HCT116 (cell line): ENCODE measurements at regions of chr16 and their contacts with region 1.

Region 1: DNA sequence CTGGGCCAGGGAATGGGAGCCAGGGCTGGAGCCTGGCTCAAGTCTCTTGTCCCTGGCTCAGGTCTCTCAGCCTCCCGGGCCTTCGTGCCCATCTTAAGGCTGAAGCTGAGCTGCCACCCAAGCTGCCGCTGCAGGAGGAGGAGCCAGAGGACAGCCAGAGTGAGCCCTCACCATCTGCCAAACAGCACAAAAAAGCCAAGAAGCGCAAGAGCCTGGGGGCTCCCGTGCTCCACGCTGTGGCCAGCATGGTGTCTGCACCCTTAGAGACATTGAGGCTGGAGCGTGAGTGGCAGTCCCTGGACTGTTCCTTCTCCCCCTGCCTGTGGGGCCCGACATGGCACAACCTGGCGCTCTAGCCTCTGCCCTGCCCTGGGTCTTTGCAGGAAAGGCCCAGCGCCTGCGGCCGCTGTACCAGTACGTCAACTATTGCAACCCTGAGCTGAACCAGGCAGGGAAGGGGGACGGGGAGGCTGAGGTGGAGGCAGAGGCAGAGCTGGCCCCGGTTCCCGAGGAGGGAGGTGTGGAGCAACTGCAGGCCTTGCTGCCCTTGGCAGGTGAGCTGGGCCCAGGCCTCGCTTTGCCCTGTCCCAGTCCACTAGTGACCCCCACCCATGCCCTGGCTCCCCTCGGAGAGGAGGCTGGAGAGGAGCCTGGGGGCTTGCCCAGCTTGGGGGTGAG is 1.3 kb downstream of the C16orf86 start:
- DNase-seq: peak; percentile 77
- ATAC-seq: peak; percentile 83
- H3K4me3 ChIP-seq: no peak overlapping the region
- H3K27ac ChIP-seq: peak overlapping the region; percentile 50; the same call in 1 of the 2 replicates
- H3K4me1 ChIP-seq: peaks cover 6 to 41% of the 10 kb centered on the region in 2 experiments; a peak in 3 of 4 replicates
- H3K27me3 ChIP-seq: no peaks in the 10 kb centered on the region
- CTCF ChIP-seq: peak in 2 of 3 experiments; percentile 75 to 88; a peak in 4 of 6 replicates
- POLR2A ChIP-seq: no peak
- RAD21 ChIP-seq: no peak

Region 2: GRCh38 chr16:67499106-67499505 is 168.8 kb before region 1 on chr16:
- CTCF ChIA-PET with region 1: no interaction called
- POLR2A ChIA-PET with region 1: no interaction called
- RAD21 ChIA-PET with region 1: no interaction called
- intact Hi-C with region 1: loop called (anchors 1 kb)
- DNase-seq: no peak
- ATAC-seq: no peak
- H3K4me3 ChIP-seq: no peak overlapping the region
- H3K27ac ChIP-seq: no peak overlapping the region
- H3K4me1 ChIP-seq: peaks cover 0 to 2% of the 10 kb centered on the region in 2 experiments; a peak in 1 of 4 replicates
- H3K27me3 ChIP-seq: no peaks in the 10 kb centered on the region
- CTCF ChIP-seq: no peak
- POLR2A ChIP-seq: no peak
- RAD21 ChIP-seq: no peak

Region 3: DNA sequence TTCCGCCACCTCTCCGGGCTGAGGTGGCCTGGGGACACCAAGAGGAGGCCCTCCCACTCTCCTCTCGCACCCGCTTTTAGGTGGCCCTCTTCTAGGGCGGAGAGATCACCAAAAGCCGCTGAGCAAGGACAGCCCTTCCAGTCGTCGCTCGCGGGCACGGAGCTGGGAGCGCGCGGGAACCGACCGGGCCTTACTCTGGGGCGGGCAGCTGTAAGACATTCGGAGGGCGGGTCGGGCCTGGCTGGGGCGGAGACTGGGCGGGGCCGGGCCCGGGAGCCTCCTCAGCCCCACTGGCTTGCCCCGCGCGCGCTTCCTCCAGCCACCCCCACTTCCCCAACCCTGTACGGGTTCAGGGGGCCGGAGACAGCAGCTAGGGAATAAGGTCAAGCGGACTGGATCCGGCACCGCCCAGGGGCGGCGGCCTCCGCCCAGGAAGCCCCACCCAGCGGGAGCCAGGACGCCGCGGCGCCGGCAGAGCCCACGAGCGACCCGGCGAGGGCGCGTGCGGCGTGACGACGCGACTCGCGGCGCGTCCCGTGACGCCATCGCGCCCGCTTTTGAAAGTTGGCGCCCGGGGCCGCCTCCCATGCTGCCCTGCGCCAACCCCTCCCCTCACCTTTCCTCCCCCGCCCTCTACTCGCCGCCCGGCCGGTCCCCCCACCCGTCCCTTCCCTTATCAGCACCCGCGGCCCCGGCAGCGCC is 106.0 kb before region 1 on chr16:
- CTCF ChIA-PET with region 1: interaction called, 5 read pairs
- POLR2A ChIA-PET with region 1: no interaction called
- RAD21 ChIA-PET with region 1: no interaction called
- intact Hi-C with region 1: loop called (anchors 1 kb)
- DNase-seq: peak; percentile 92
- ATAC-seq: peak; percentile 86
- H3K4me3 ChIP-seq: peak overlapping the region; percentile 88 to 99
- H3K27ac ChIP-seq: peak overlapping the region; percentile 100
- H3K4me1 ChIP-seq: peaks cover 18 to 26% of the 10 kb centered on the region in 2 experiments
- H3K27me3 ChIP-seq: no peaks in the 10 kb centered on the region
- CTCF ChIP-seq: no peak
- POLR2A ChIP-seq: peak; percentile 22
- RAD21 ChIP-seq: no peak

Region 4: GRCh38 chr16:68642436-68643101 is 974.6 kb after region 1 on chr16:
- CTCF ChIA-PET with region 1: no interaction called
- POLR2A ChIA-PET with region 1: no interaction called
- RAD21 ChIA-PET with region 1: no interaction called
- intact Hi-C with region 1: no loop called
- DNase-seq: no peak
- ATAC-seq: no peak
- H3K4me3 ChIP-seq: no peak overlapping the region
- H3K27ac ChIP-seq: no peak overlapping the region
- H3K4me1 ChIP-seq: peaks cover 21 to 38% of the 10 kb centered on the region in 2 experiments
- H3K27me3 ChIP-seq: no peaks in the 10 kb centered on the region
- CTCF ChIP-seq: no peak
- POLR2A ChIP-seq: no peak
- RAD21 ChIP-seq: no peak